Activated T-helper 1 cell treated with anti-CD3 and anti-CD28 coated beads, Interleukin-12 subunit alpha, Interleukin-12 subunit beta, Interleukin-2, Interleukin-4 antibody, amounts not matched to agents 30 ng/mL and 10 ng/mL and 1 ng/mL, durations not matched to agents 14 hours and 24 hours and 36 hours (primary cell): ENCODE measurements at regions of chr10 and their contacts with region 1.

Region 1: GRCh38 chr10:48656241-48656913 is 28.3 kb upstream of the WDFY4 start:
- DNase-seq: peak; percentile 85
- H3K4me3 Mint-ChIP-seq: peak overlapping the region; percentile 79
- H3K27ac Mint-ChIP-seq: no peak overlapping the region
- H3K4me1 Mint-ChIP-seq: peaks cover 10% of the 10 kb centered on the region
- H3K27me3 Mint-ChIP-seq: peaks cover 39% of the 10 kb centered on the region

Region 2: DNA sequence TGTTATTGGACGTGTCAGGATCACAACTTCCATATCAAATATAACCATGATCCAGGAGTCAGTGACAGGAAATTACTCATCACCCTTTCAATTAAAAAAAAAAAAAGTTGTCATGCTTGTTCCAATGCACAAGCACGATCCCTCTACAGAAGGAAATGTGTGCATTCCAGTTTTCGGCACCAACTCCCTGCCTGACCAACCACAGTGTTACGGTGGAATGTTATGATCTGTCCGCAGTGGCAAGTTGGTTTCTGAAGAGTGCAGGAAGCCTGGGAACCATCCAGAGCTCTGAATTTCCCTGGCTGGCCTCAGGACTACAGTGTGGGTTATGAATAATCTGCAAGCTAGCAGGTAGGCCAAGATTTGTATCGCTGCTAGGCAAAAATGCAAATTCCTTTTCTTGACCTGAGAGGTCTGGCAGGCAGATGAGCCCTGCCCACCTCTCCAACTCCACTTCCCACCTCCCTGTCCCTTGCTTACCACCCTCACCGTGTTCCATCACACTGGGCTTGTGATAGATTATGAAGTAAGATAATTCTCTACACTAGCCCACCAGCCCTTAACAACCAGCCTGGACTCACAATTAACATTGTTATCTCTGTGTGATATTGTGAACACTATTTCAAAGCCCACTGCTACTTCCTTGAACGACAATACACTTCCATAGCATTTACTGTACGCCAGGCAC is 402.3 kb before region 1 on chr10:
- intact Hi-C with region 1: no loop called
- DNase-seq: no peak
- H3K4me3 Mint-ChIP-seq: no peak overlapping the region
- H3K27ac Mint-ChIP-seq: no peak overlapping the region
- H3K4me1 Mint-ChIP-seq: no peaks in the 10 kb centered on the region
- H3K27me3 Mint-ChIP-seq: peaks cover 2% of the 10 kb centered on the region

Region 3: DNA sequence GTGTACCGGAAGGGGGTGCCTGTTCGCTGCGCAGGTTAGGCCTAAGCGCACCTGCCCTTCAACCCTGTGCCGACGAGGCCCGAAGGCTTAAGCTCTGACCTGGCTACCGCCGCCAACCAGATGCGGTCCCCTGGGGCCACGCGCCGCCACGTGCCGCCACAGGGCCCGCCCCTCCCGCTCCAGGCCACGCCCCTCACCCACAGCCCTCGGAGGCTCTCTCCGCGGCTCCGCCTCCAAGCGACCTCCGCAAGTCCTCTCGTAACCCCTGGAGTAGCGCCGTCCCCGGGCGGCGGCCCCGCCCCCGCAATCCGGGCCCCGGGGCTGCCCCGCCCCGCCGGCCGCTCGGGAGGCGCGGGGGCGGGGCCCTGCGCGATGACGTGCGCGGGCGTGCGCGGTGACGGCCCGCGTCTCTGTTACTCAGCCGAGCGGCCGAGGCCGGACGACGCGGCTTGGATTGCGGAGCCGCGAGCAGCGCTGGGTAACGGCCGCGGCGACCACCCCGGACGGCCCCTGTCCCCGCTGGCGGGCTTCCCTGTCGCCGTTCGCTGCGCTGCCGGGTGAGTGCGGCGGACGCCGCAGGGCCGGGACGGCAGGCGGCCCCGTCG is 350.0 kb before region 1 on chr10 and contains the start of gene MAPK8:
- intact Hi-C with region 1: loop called (anchors 5 kb)
- DNase-seq: peak; percentile 88
- H3K4me3 Mint-ChIP-seq: peak within 1 kb of the TSS; percentile 85
- H3K27ac Mint-ChIP-seq: peak within 1 kb of the TSS; percentile 68
- H3K4me1 Mint-ChIP-seq: peaks cover 19% of the 10 kb centered on the region
- H3K27me3 Mint-ChIP-seq: peaks cover 17% of the 10 kb centered on the region
- total RNA-seq, gene MAPK8: 51.6 and 52.3 TPM in 2 replicates

Region 4: GRCh38 chr10:48551861-48552591 is 104.4 kb before region 1 on chr10:
- intact Hi-C with region 1: loop called (anchors 1 kb)
- DNase-seq: no peak
- H3K4me3 Mint-ChIP-seq: no peak overlapping the region
- H3K27ac Mint-ChIP-seq: no peak overlapping the region
- H3K4me1 Mint-ChIP-seq: no peaks in the 10 kb centered on the region
- H3K27me3 Mint-ChIP-seq: no peaks in the 10 kb centered on the region

Region 5: GRCh38 chr10:48742891-48743860 is 86.8 kb after region 1 on chr10:
- intact Hi-C with region 1: no loop called
- DNase-seq: no peak
- H3K4me3 Mint-ChIP-seq: no peak overlapping the region
- H3K27ac Mint-ChIP-seq: no peak overlapping the region
- H3K4me1 Mint-ChIP-seq: no peaks in the 10 kb centered on the region
- H3K27me3 Mint-ChIP-seq: peaks cover 3% of the 10 kb centered on the region

Region 6: DNA sequence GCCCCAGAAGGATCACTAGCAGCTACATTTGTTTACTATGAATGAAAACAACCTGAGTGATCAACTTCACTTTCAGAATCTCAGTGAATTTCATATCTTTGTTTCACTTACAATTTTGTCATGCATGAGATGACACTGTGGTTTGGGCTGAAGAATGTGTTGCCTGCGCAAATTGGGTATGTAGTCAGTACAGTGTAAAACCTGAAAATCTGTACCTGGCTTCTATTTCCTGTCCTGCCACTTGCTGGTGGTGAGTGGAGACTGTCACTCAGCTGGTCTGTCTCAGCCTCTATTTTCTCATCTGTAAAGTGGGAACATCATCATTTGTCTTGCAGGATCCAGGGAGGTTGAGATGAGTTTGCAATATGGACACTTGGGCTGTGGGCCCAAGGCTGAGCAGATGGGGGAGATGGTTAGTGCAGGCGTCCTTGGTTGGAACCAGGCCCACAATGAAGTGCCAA is 146.3 kb after region 1 on chr10:
- intact Hi-C with region 1: loop called (anchors 5 kb)
- DNase-seq: peak; percentile 10
- H3K4me3 Mint-ChIP-seq: no peak overlapping the region
- H3K27ac Mint-ChIP-seq: peak overlapping the region; percentile 27
- H3K4me1 Mint-ChIP-seq: peaks cover 49% of the 10 kb centered on the region
- H3K27me3 Mint-ChIP-seq: peaks cover 4% of the 10 kb centered on the region

Region 7: DNA sequence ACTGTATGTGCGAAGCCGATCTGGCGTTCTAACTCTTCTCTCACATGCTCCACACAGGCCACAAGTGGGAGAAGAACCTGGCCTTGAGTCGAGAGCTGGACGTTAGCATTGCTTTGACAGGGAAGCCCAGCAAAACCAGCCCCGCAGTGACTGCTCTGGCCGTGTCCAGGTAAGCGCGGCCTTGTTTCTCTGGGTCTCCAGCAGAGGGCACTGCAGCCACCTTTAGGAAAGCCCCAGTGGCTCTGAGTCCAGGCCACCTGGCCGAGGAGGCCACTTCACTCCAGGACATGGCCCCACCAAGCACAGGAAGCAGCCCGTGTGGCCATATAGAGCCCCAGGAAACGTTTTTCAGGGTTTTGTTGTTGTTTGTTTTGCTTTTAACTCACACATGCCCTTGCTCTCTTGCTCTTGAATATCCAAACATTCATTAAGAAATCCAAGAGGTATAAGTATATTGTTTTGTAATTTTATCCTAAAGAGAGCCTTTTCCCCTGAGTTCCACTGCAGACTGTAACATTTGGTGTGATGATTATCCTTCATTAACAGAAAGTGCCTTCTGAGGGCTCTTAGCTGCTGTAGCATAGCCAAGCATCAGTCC is 325.0 kb after region 1 on chr10:
- intact Hi-C with region 1: loop called (anchors 1 kb)
- DNase-seq: peak; percentile 19
- H3K4me3 Mint-ChIP-seq: no peak overlapping the region
- H3K27ac Mint-ChIP-seq: no peak overlapping the region
- H3K4me1 Mint-ChIP-seq: no peaks in the 10 kb centered on the region
- H3K27me3 Mint-ChIP-seq: peaks cover 2% of the 10 kb centered on the region

Region 8: GRCh38 chr10:49407552-49408137 is 751.3 kb after region 1 on chr10:
- intact Hi-C with region 1: loop called (anchors 10 kb)
- DNase-seq: peak; percentile 59
- H3K4me3 Mint-ChIP-seq: no peak overlapping the region
- H3K27ac Mint-ChIP-seq: no peak overlapping the region
- H3K4me1 Mint-ChIP-seq: no peaks in the 10 kb centered on the region
- H3K27me3 Mint-ChIP-seq: peaks cover 22% of the 10 kb centered on the region

Region 9: GRCh38 chr10:49538381-49539319 is 882.3 kb after region 1 on chr10 and contains the start of gene ERCC6:
- intact Hi-C with region 1: loop called (anchors 1 kb)
- DNase-seq: peak; percentile 95
- H3K4me3 Mint-ChIP-seq: peak within 1 kb of the TSS; percentile 92
- H3K27ac Mint-ChIP-seq: peak within 1 kb of the TSS; percentile 96
- H3K4me1 Mint-ChIP-seq: peaks cover 34% of the 10 kb centered on the region
- H3K27me3 Mint-ChIP-seq: peaks cover 2% of the 10 kb centered on the region
- total RNA-seq, gene ERCC6: 11.2 and 11.7 TPM in 2 replicates